CD4-positive, alpha-beta memory T cell (primary cell): ENCODE measurements at regions of chr3 and their contacts with region 1.

Region 1: GRCh38 chr3:192917404-192918274 is at the start of gene MB21D2:
- DNase-seq: peak; percentile 64 to 74 (median 69)
- H3K4me3 ChIP-seq: peak within 1 kb of the TSS; percentile 58 to 91
- H3K4me3 Mint-ChIP-seq: peak within 1 kb of the TSS; percentile 92 to 98 (median 96)
- H3K27ac ChIP-seq: peak within 1 kb of the TSS; percentile 78
- H3K27ac Mint-ChIP-seq: peak within 1 kb of the TSS; percentile 91 to 97 (median 94)
- H3K4me1 ChIP-seq: peaks cover 25% of the 10 kb centered on the region
- H3K4me1 Mint-ChIP-seq: peaks cover 10 to 52% (median 33%) of the 10 kb centered on the region in 4 donors
- H3K27me3 ChIP-seq: no peaks in the 10 kb centered on the region
- H3K27me3 Mint-ChIP-seq: peaks cover 17 to 24% of the 10 kb centered on the region in 2 donors
- total RNA-seq, gene MB21D2: 3.4 to 3.5 TPM

Region 2: DNA sequence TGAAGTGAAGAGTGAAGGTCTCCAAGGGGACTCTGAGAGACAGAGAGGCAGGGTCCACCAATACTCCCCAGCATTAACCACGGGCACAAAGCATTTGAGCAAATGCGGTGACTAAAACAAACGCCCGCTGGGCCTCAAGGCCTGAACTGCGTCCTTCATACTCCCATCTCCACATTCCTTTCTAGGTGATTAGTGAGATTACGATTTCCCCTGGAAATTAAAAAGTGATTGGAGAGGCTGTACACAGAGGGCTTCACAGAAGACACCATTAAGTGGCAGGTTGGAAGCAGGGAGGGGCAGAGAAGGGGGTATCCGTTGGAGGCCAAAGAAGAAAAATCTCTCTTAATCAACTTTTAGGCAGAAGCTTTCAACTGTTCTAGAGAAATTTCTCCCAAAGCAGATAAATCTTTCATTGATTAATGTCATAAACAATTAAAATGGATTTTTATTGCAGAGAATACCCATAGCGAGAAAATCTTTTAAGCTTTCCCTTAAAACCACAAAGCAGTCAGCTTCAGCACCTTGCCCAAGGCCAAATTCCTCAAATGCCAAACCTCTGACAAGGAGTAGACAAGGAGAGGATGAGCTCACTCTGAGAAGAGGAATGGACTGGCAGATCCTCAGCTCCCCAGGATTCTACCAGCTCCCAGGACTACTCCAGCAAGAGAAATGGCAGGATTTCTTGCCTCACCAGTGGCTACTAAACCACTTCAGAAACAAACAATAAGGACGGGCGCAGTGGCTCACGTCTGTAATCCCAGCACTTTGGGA is 38.1 kb before region 1 on chr3:
- CTCF ChIA-PET with region 1: interaction called, 4 read pairs
- POLR2A ChIA-PET with region 1: no interaction called
- intact Hi-C with region 1: loop called (anchors 5 kb)
- DNase-seq: no peak
- H3K4me3 ChIP-seq: no peak overlapping the region
- H3K4me3 Mint-ChIP-seq: no peak overlapping the region
- H3K27ac ChIP-seq: no peak overlapping the region
- H3K27ac Mint-ChIP-seq: no peak overlapping the region
- H3K4me1 ChIP-seq: peaks cover 5% of the 10 kb centered on the region
- H3K4me1 Mint-ChIP-seq: peaks cover 0 to 22% (median 8%) of the 10 kb centered on the region in 4 donors
- H3K27me3 ChIP-seq: no peaks in the 10 kb centered on the region
- H3K27me3 Mint-ChIP-seq: peaks cover 0 to 1% of the 10 kb centered on the region in 2 donors

Region 3: GRCh38 chr3:192892981-192893700 is 24.5 kb before region 1 on chr3:
- CTCF ChIA-PET with region 1: interaction called, 6 read pairs
- POLR2A ChIA-PET with region 1: interaction called, 45 read pairs
- intact Hi-C with region 1: loop called (anchors 1 kb)
- DNase-seq: peak; percentile 67 to 89 (median 74)
- H3K4me3 ChIP-seq: peak overlapping the region in 1 of 2 donors; percentile 41
- H3K4me3 Mint-ChIP-seq: peak overlapping the region; percentile 63 to 88 (median 78)
- H3K27ac ChIP-seq: peak overlapping the region; percentile 68
- H3K27ac Mint-ChIP-seq: peak overlapping the region; percentile 86 to 99 (median 95)
- H3K4me1 ChIP-seq: peaks cover 98% of the 10 kb centered on the region
- H3K4me1 Mint-ChIP-seq: peaks cover 29 to 91% (median 63%) of the 10 kb centered on the region in 4 donors
- H3K27me3 ChIP-seq: no peaks in the 10 kb centered on the region
- H3K27me3 Mint-ChIP-seq: peaks cover 0 to 3% of the 10 kb centered on the region in 2 donors

Region 4: GRCh38 chr3:193040836-193041672 is 123.4 kb after region 1 on chr3:
- CTCF ChIA-PET with region 1: interaction called, 6 read pairs
- POLR2A ChIA-PET with region 1: no interaction called
- intact Hi-C with region 1: loop called (anchors 5 kb)
- DNase-seq: peak; percentile 34 to 57 (median 51)
- H3K4me3 ChIP-seq: no peak overlapping the region
- H3K4me3 Mint-ChIP-seq: no peak overlapping the region
- H3K27ac ChIP-seq: no peak overlapping the region
- H3K27ac Mint-ChIP-seq: no peak overlapping the region
- H3K4me1 ChIP-seq: no peaks in the 10 kb centered on the region
- H3K4me1 Mint-ChIP-seq: peaks cover 0 to 1% (median 0%) of the 10 kb centered on the region in 4 donors
- H3K27me3 ChIP-seq: no peaks in the 10 kb centered on the region
- H3K27me3 Mint-ChIP-seq: peaks cover 0 to 1% of the 10 kb centered on the region in 2 donors